Endothelial cell of umbilical vein (primary cell): ENCODE measurements at regions of chr15 and their contacts with region 1.

Region 1: GRCh38 chr15:47711654-47712053 is 5.7 kb upstream of the SEMA6D start:
- DNase-seq: peak; percentile 26
- H3K4me3 ChIP-seq: no peak overlapping the region
- H3K27ac ChIP-seq: no peak overlapping the region
- H3K4me1 ChIP-seq: peaks cover 17% of the 10 kb centered on the region
- H3K27me3 ChIP-seq: no peaks in the 10 kb centered on the region
- CTCF ChIP-seq: peak; percentile 24 to 39
- POLR2A ChIP-seq: no peak

Region 2: GRCh38 chr15:47374222-47374621 is 337.4 kb before region 1 on chr15:
- CTCF ChIA-PET with region 1: interaction called, 21 read pairs
- POLR2A ChIA-PET with region 1: no interaction called
- dilution Hi-C with region 1: no loop called
- intact Hi-C with region 1: loop called (anchors 2 kb)
- DNase-seq: peak; percentile 52
- H3K4me3 ChIP-seq: no peak overlapping the region
- H3K27ac ChIP-seq: no peak overlapping the region
- H3K4me1 ChIP-seq: no peaks in the 10 kb centered on the region
- H3K27me3 ChIP-seq: no peaks in the 10 kb centered on the region
- CTCF ChIP-seq: peak; percentile 36 to 49
- POLR2A ChIP-seq: no peak

Region 3: GRCh38 chr15:48084759-48085590 is 373.3 kb after region 1 on chr15:
- CTCF ChIA-PET with region 1: interaction called, 11 read pairs
- POLR2A ChIA-PET with region 1: no interaction called
- dilution Hi-C with region 1: no loop called
- intact Hi-C with region 1: loop called (anchors 1 kb)
- DNase-seq: peak; percentile 18
- H3K4me3 ChIP-seq: no peak overlapping the region
- H3K27ac ChIP-seq: no peak overlapping the region
- H3K4me1 ChIP-seq: no peaks in the 10 kb centered on the region
- H3K27me3 ChIP-seq: no peaks in the 10 kb centered on the region
- CTCF ChIP-seq: peak; percentile 29 to 47
- POLR2A ChIP-seq: no peak